Mammary epithelial cell (primary cell): ENCODE measurements at regions of chr3 and their contacts with region 1.

Region 1: GRCh38 chr3:69410250-69410649 is 24.4 kb upstream of the FRMD4B start:
- DNase-seq: peak; percentile 64
- H3K4me3 ChIP-seq: no peak overlapping the region
- H3K27ac ChIP-seq: peak overlapping the region; percentile 94
- H3K4me1 ChIP-seq: peaks cover 35% of the 10 kb centered on the region
- H3K27me3 ChIP-seq: no peaks in the 10 kb centered on the region
- CTCF ChIP-seq: peak; percentile 87 to 96

Region 2: DNA sequence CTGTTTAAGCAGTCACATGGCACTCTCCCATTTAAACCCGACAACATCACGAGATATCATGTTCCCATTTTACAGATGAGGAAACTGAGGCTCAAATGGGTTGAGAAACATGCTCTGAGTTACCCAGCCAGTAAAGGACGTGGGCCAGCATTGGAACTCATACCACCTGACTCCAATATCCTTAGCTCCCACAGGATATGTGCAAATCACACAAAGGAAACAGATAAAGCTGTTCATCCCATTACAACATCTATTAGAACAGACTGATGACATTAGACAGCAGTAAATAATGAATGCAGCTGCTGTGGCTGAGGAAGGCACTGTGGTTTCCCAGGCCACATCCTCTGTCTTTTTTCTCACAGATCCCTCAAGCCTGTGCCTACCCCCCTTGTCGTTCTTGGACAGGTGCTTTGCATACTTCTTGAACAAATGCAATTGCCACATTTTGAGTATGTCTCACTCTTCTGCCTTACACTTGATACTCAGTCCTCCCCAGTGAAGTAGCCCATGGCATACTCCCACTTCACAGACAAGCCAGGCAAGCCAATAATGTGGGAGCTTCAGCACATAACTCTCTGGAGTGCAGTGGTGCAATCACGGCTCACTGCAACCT is 42.0 kb before region 1 on chr3:
- CTCF ChIA-PET with region 1: interaction called, 5 read pairs
- dilution Hi-C with region 1: no loop called
- in situ Hi-C with region 1: no loop called
- intact Hi-C with region 1: loop called (anchors 2 kb)
- DNase-seq: peak; percentile 73
- H3K4me3 ChIP-seq: no peak overlapping the region
- H3K27ac ChIP-seq: peak overlapping the region; percentile 87
- H3K4me1 ChIP-seq: peaks cover 65% of the 10 kb centered on the region
- H3K27me3 ChIP-seq: no peaks in the 10 kb centered on the region
- CTCF ChIP-seq: no peak

Region 3: GRCh38 chr3:69385723-69386555 is 24.3 kb before region 1 on chr3 and contains the start of gene FRMD4B:
- CTCF ChIA-PET with region 1: interaction called, 3 read pairs
- dilution Hi-C with region 1: no loop called
- in situ Hi-C with region 1: no loop called
- intact Hi-C with region 1: loop called (anchors 2 kb)
- DNase-seq: peak; percentile 65
- H3K4me3 ChIP-seq: peak within 1 kb of the TSS; percentile 32 to 68 (median 59)
- H3K27ac ChIP-seq: peak within 1 kb of the TSS; percentile 76
- H3K4me1 ChIP-seq: peaks cover 41% of the 10 kb centered on the region
- H3K27me3 ChIP-seq: no peaks in the 10 kb centered on the region
- CTCF ChIP-seq: peak; percentile 16 to 43
- total RNA-seq, gene FRMD4B: 42.0 to 64.1 TPM

Region 4: GRCh38 chr3:69499899-69500421 is 89.7 kb after region 1 on chr3:
- CTCF ChIA-PET with region 1: no interaction called
- dilution Hi-C with region 1: no loop called
- in situ Hi-C with region 1: no loop called
- intact Hi-C with region 1: no loop called
- DNase-seq: no peak
- H3K4me3 ChIP-seq: no peak overlapping the region
- H3K27ac ChIP-seq: no peak overlapping the region
- H3K4me1 ChIP-seq: peaks cover 27% of the 10 kb centered on the region
- H3K27me3 ChIP-seq: no peaks in the 10 kb centered on the region
- CTCF ChIP-seq: no peak

Region 5: GRCh38 chr3:69803681-69804270 is 393.5 kb after region 1 on chr3:
- CTCF ChIA-PET with region 1: interaction called, 10 read pairs
- dilution Hi-C with region 1: no loop called
- in situ Hi-C with region 1: no loop called
- intact Hi-C with region 1: no loop called
- DNase-seq: no peak
- H3K4me3 ChIP-seq: no peak overlapping the region
- H3K27ac ChIP-seq: no peak overlapping the region
- H3K4me1 ChIP-seq: peaks cover 3% of the 10 kb centered on the region
- H3K27me3 ChIP-seq: no peaks in the 10 kb centered on the region
- CTCF ChIP-seq: no peak